ENCODE measurements at regions of chr11 and their contacts with region 1.

Region 1: GRCh38 chr11:98772893-98773292 is 247.9 kb upstream of the CNTN5 start:
- DNase-seq: no peak
- H3K4me3 ChIP-seq: no peak overlapping the region
- H3K27ac ChIP-seq: no peak overlapping the region
- H3K4me1 ChIP-seq: no peaks in the 10 kb centered on the region
- H3K27me3 ChIP-seq: no peaks in the 10 kb centered on the region
- CTCF ChIP-seq: no peak

Region 2: DNA sequence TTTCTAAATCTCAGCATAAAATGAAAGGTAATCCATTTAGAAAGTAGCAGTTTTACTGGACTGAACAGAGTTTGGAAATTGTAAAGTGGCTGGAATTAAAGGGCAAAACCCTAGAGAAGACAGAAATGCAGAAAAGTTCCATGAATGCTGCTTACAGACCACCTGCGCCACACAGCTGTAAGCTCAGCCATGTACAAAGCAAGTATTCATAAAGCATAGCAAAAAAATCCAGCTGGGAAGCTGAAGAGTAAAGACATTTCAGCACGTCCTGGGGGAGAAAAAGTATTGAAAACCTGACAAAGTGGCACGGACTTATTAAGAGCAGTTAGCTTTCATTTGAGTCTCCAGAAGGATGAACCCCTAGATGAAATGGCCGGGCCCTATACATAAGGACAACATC is 27.8 kb after region 1 on chr11:
- intact Hi-C with region 1: loop called (anchors 2 kb)
- DNase-seq: no peak
- H3K4me3 ChIP-seq: no peak overlapping the region
- H3K27ac ChIP-seq: no peak overlapping the region
- H3K4me1 ChIP-seq: no peaks in the 10 kb centered on the region
- H3K27me3 ChIP-seq: no peaks in the 10 kb centered on the region
- CTCF ChIP-seq: no peak

Measured in tibial artery (tissue), 4 donors.